ENCODE measurements at regions of chr4 and their contacts with region 1.

Region 1: DNA sequence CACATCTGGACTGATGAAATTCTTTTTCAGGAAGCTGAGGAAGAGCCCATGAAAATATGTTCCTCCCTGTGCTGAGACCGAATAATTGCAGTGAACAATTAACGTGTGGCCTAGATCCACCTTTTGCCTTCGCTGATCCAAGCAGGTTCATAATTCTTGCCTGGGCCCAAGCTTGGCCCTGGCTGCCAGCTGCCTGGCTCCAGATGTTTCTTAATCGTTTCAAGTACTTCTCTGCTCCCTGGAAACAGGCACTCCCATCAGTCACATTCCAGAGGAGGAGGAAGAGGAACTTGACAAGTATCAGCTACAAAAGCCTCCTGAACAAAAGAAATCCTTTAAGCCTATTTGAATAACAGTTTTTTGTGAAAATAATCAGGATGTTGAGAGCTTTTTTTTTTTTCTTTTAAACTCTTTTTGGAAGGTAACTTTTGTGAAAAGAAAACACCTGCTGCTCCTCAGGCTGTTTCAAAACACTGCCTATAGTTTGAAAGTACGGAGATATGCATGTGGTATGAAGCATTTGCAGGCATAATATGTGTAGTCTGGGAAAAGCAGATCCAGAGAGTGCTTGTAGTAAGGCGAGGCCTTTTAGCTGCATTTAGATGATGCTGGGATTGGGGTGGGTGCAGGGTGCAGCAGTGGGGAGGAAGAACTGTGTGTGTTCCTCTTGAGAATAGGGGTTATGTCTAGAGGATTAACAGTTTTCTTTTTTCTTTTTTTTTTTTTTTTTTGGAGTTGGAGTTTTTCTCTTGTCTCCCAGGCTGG is 154.4 kb downstream of the PTTG2 start:
- DNase-seq: no peak
- H3K4me3 ChIP-seq: no peak overlapping the region
- H3K27me3 ChIP-seq: no peaks in the 10 kb centered on the region
- CTCF ChIP-seq: no peak

Region 2: DNA sequence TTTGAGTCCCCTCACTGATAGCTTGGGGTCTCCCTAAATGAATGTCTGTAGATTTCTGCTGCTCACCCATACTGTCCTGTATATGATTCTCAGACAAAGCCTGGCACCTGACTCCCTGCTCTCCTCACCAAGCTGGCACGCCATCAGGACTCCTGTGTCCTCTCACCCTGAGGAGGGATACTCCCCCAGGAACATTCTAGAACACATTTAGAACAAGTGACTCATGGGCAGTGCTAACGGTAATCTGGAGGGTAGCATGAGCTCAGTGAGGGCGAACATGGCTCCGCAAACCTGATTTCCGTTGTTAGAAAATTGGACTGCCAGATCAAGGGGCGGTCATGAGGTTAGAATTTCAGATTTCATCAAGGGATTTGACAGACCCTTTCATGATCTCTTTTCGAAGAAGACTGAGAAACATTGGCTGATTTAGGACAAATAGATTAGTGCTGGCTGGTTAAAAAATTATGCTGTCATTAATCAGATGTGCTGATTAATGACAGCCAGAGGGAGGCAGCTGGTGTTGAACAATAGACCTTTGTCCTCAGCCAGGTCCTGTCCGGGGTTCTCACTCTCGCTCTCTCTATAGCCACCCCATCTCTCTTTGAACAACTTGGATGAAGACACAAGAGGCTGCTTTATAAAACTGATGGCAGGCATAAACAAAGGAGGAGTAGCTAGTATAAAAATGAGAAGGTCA is 89.9 kb after region 1 on chr4:
- CTCF ChIA-PET with region 1: no interaction called
- POLR2A ChIA-PET with region 1: no interaction called
- DNase-seq: no peak
- H3K4me3 ChIP-seq: no peak overlapping the region
- H3K27me3 ChIP-seq: peaks cover 3% of the 10 kb centered on the region
- CTCF ChIP-seq: no peak

Region 3: GRCh38 chr4:39037941-39038340 is 923.4 kb after region 1 on chr4:
- CTCF ChIA-PET with region 1: no interaction called
- POLR2A ChIA-PET with region 1: interaction called, 13 read pairs
- DNase-seq: no peak
- H3K4me3 ChIP-seq: no peak overlapping the region
- H3K27me3 ChIP-seq: no peaks in the 10 kb centered on the region
- CTCF ChIP-seq: no peak

Region 4: GRCh38 chr4:39083164-39083563 is 968.6 kb after region 1 on chr4:
- CTCF ChIA-PET with region 1: no interaction called
- POLR2A ChIA-PET with region 1: no interaction called
- DNase-seq: no peak
- H3K4me3 ChIP-seq: no peak overlapping the region
- H3K27me3 ChIP-seq: no peaks in the 10 kb centered on the region
- CTCF ChIP-seq: no peak

Measured in BJ (cell line).